Activated CD8-positive, alpha-beta T cell treated with anti-CD3 and anti-CD28 coated beads, Interleukin-2, amount 10 ng/mL, durations not matched to agents 7 days and 5 days (primary cell): ENCODE measurements at regions of chr7 and their contacts with region 1.

Region 1: GRCh38 chr7:37234928-37235327 is 213.7 kb downstream of the ELMO1 start:
- DNase-seq: peak; percentile 31
- ATAC-seq: no peak
- H3K4me3 Mint-ChIP-seq: no peak overlapping the region
- H3K27ac Mint-ChIP-seq: no peak overlapping the region
- H3K4me1 Mint-ChIP-seq: peaks cover 4% of the 10 kb centered on the region
- H3K27me3 Mint-ChIP-seq: no peaks in the 10 kb centered on the region

Region 2: GRCh38 chr7:37297546-37297945 is 62.6 kb after region 1 on chr7:
- CTCF ChIA-PET with region 1: no interaction called
- POLR2A ChIA-PET with region 1: no interaction called
- DNase-seq: no peak
- ATAC-seq: no peak
- H3K4me3 Mint-ChIP-seq: no peak overlapping the region
- H3K27ac Mint-ChIP-seq: no peak overlapping the region
- H3K4me1 Mint-ChIP-seq: no peaks in the 10 kb centered on the region
- H3K27me3 Mint-ChIP-seq: no peaks in the 10 kb centered on the region

Region 3: DNA sequence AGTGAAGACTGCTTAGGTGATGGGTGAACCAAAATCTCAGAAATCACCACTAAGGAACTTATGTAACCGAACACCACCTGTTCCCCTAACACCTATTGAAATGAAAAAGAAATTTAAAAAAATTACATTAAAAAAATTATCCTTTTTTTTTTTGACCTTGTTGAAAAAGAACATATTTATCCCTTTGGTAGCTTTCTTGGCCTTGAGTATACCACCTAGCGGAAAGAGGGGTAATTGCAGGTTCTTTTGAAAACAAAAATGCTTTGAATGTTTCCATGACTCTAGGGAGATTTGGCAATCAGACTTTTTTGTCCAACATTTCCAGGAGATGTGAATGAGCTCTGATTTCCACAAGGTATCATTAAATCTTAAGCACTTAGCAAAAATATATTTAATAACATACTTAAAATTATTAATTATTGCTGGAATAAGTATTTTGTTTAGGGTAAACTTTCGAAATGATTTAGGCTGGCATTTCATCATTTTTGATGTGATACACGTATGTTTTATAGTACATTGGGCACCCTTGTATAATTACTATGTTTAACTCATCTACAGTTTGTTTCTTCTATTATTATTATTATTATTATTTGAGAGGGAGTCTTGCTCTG is 260.8 kb after region 1 on chr7:
- CTCF ChIA-PET with region 1: interaction called, 16 read pairs
- POLR2A ChIA-PET with region 1: no interaction called
- DNase-seq: no peak
- ATAC-seq: no peak
- H3K4me3 Mint-ChIP-seq: no peak overlapping the region
- H3K27ac Mint-ChIP-seq: no peak overlapping the region
- H3K4me1 Mint-ChIP-seq: peaks cover 5% of the 10 kb centered on the region
- H3K27me3 Mint-ChIP-seq: no peaks in the 10 kb centered on the region

Region 4: DNA sequence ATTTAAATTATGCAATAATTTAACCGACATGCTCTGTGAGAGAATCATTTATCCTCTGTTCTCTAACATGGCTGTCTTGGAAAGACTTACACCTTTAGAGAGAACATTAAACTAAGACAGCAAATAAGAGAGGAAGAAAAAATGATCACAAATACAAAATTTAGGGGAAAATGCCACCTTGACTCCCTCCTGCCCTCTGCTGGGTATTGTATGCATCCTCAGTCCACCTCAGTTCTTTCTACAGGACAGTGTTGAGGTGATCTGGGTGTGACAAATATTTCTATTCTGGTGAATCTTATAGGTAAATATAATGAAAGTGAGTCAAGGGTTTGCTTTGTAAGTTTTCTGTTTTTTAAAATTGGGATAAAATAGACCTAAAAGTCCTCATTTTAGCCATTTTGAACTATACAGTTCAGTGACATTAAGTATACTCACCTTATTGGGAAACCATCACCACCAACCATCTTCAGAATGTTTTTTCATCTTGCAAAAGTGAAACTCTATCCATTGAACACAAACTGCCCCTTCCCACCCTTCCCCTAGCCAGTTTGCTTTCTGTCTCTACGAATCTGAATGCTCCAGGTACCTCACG is 275.2 kb after region 1 on chr7:
- CTCF ChIA-PET with region 1: interaction called, 10 read pairs
- POLR2A ChIA-PET with region 1: no interaction called
- DNase-seq: peak; percentile 31
- ATAC-seq: no peak
- H3K4me3 Mint-ChIP-seq: no peak overlapping the region
- H3K27ac Mint-ChIP-seq: no peak overlapping the region
- H3K4me1 Mint-ChIP-seq: no peaks in the 10 kb centered on the region
- H3K27me3 Mint-ChIP-seq: peaks cover 20% of the 10 kb centered on the region

Region 5: DNA sequence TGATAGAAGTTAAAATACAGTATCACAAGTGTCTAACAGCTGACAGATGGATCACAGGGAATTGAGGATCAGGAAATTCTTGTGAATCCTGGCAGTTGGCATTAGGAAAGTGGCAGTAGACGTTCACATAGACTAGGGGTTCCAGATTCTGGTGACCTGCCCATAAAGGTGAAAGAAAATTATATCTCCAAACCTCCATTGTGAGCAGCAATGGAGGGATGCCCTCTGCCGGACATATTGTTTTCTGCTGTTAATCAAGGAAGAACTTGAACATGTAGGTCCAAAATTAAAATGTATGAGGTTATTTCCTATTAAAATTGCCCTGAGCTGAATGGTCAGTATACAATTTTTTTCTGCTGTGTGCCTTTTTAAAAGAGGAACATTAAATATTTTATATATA is 618.5 kb after region 1 on chr7:
- CTCF ChIA-PET with region 1: no interaction called
- POLR2A ChIA-PET with region 1: no interaction called
- DNase-seq: no peak
- ATAC-seq: no peak
- H3K4me3 Mint-ChIP-seq: no peak overlapping the region
- H3K27ac Mint-ChIP-seq: no peak overlapping the region
- H3K4me1 Mint-ChIP-seq: no peaks in the 10 kb centered on the region
- H3K27me3 Mint-ChIP-seq: peaks cover 5% of the 10 kb centered on the region